CD8-positive, alpha-beta memory T cell (primary cell): ENCODE measurements at regions of chr5 and their contacts with region 1.

Region 1: GRCh38 chr5:35651002-35651756 is 33.5 kb downstream of the SPEF2 start:
- DNase-seq: peak; percentile 9 to 73 (median 53)
- H3K4me3 ChIP-seq: no peak overlapping the region
- H3K4me3 Mint-ChIP-seq: no peak overlapping the region
- H3K27ac ChIP-seq: no peak overlapping the region
- H3K27ac Mint-ChIP-seq: peak overlapping the region in 7 of 8 donors; percentile 38 to 92 (median 67)
- H3K4me1 ChIP-seq: peaks cover 4% of the 10 kb centered on the region
- H3K4me1 Mint-ChIP-seq: peaks cover 0 to 21% (median 2%) of the 10 kb centered on the region in 3 donors
- H3K27me3 ChIP-seq: no peaks in the 10 kb centered on the region
- H3K27me3 Mint-ChIP-seq: no peaks in the 10 kb centered on the region

Region 2: GRCh38 chr5:35617435-35618303 is 33.5 kb before region 1 on chr5 and contains the start of gene SPEF2:
- CTCF ChIA-PET with region 1: interaction called, 21 read pairs
- POLR2A ChIA-PET with region 1: no interaction called
- DNase-seq: peak; percentile 53 to 84 (median 76)
- H3K4me3 ChIP-seq: peak within 1 kb of the TSS; percentile 88
- H3K4me3 Mint-ChIP-seq: peak within 1 kb of the TSS; percentile 85 to 97 (median 95)
- H3K27ac ChIP-seq: peak within 1 kb of the TSS; percentile 58
- H3K27ac Mint-ChIP-seq: peak within 1 kb of the TSS; percentile 79 to 100 (median 98)
- H3K4me1 ChIP-seq: peaks cover 6% of the 10 kb centered on the region
- H3K4me1 Mint-ChIP-seq: peaks cover 22 to 40% (median 30%) of the 10 kb centered on the region in 3 donors
- H3K27me3 ChIP-seq: no peaks in the 10 kb centered on the region
- H3K27me3 Mint-ChIP-seq: peaks cover 0 to 3% of the 10 kb centered on the region in 2 donors
- total RNA-seq, gene SPEF2: 5.3 to 6.8 TPM

Region 3: GRCh38 chr5:35672995-35673394 is 21.8 kb after region 1 on chr5:
- CTCF ChIA-PET with region 1: interaction called, 16 read pairs
- POLR2A ChIA-PET with region 1: no interaction called
- DNase-seq: peak in 3 of 5 donors; percentile 34 to 65 (median 60)
- H3K4me3 ChIP-seq: peak overlapping the region; percentile 1
- H3K4me3 Mint-ChIP-seq: peak overlapping the region in 6 of 7 donors; percentile 17 to 84 (median 48)
- H3K27ac ChIP-seq: no peak overlapping the region
- H3K27ac Mint-ChIP-seq: peak overlapping the region in 7 of 8 donors; percentile 64 to 93 (median 82)
- H3K4me1 ChIP-seq: peaks cover 44% of the 10 kb centered on the region
- H3K4me1 Mint-ChIP-seq: peaks cover 53 to 71% (median 67%) of the 10 kb centered on the region in 3 donors
- H3K27me3 ChIP-seq: no peaks in the 10 kb centered on the region
- H3K27me3 Mint-ChIP-seq: no peaks in the 10 kb centered on the region

Region 4: GRCh38 chr5:35830587-35830986 is 179.4 kb after region 1 on chr5:
- CTCF ChIA-PET with region 1: no interaction called
- POLR2A ChIA-PET with region 1: no interaction called
- DNase-seq: peak in 2 of 5 donors; percentile 77 to 89
- H3K4me3 ChIP-seq: no peak overlapping the region
- H3K4me3 Mint-ChIP-seq: peak overlapping the region; percentile 24 to 66 (median 51)
- H3K27ac ChIP-seq: no peak overlapping the region
- H3K27ac Mint-ChIP-seq: peak overlapping the region; percentile 75 to 99 (median 83)
- H3K4me1 ChIP-seq: peaks cover 76% of the 10 kb centered on the region
- H3K4me1 Mint-ChIP-seq: peaks cover 9 to 95% (median 87%) of the 10 kb centered on the region in 3 donors
- H3K27me3 ChIP-seq: no peaks in the 10 kb centered on the region
- H3K27me3 Mint-ChIP-seq: peaks cover 0 to 2% of the 10 kb centered on the region in 2 donors

Region 5: GRCh38 chr5:35857606-35858205 is 206.5 kb after region 1 on chr5:
- CTCF ChIA-PET with region 1: interaction called, 15 read pairs
- POLR2A ChIA-PET with region 1: interaction called, 3 read pairs
- DNase-seq: peak in 1 of 5 donors; percentile 31
- H3K4me3 ChIP-seq: peak overlapping the region; percentile 93
- H3K4me3 Mint-ChIP-seq: peak overlapping the region; percentile 90 to 97 (median 93)
- H3K27ac ChIP-seq: peak overlapping the region; percentile 95
- H3K27ac Mint-ChIP-seq: peak overlapping the region; percentile 68 to 100 (median 98)
- H3K4me1 ChIP-seq: peaks cover 55% of the 10 kb centered on the region
- H3K4me1 Mint-ChIP-seq: peaks cover 56 to 71% (median 59%) of the 10 kb centered on the region in 3 donors
- H3K27me3 ChIP-seq: no peaks in the 10 kb centered on the region
- H3K27me3 Mint-ChIP-seq: peaks cover 0 to 1% of the 10 kb centered on the region in 2 donors

Region 6: GRCh38 chr5:35876921-35877320 is 225.7 kb after region 1 on chr5:
- CTCF ChIA-PET with region 1: interaction called, 14 read pairs
- POLR2A ChIA-PET with region 1: interaction called, 5 read pairs
- DNase-seq: no peak
- H3K4me3 ChIP-seq: no peak overlapping the region
- H3K4me3 Mint-ChIP-seq: peak overlapping the region in 4 of 7 donors; percentile 9 to 57 (median 19)
- H3K27ac ChIP-seq: no peak overlapping the region
- H3K27ac Mint-ChIP-seq: peak overlapping the region; percentile 61 to 91 (median 79)
- H3K4me1 ChIP-seq: peaks cover 62% of the 10 kb centered on the region
- H3K4me1 Mint-ChIP-seq: peaks cover 76 to 96% (median 93%) of the 10 kb centered on the region in 3 donors
- H3K27me3 ChIP-seq: no peaks in the 10 kb centered on the region
- H3K27me3 Mint-ChIP-seq: no peaks in the 10 kb centered on the region